ENCODE measurements at regions of chr10 and their contacts with region 1.

Region 1: DNA sequence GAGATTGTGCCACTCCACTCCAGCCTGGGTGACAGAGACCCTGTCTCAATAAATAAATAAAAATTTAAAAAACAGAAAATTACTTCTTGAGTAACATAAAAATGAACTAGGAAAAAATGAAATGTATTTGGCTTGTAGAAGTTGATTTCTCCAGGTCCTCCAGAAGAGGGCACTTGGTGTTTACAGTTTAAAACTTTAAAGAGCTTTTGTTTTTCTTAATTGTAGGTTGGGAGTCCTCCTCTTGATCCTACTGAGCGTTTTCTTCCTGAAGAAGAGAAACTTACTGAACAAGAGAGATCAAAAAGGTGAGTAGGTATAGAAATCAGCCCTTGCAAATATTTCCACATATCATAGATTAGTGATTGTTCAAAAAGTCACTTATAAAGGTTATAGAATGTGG is 16.2 kb downstream of the KIFBP start:
- DNase-seq: peak; percentile 73
- ATAC-seq: peak; percentile 81
- H3K4me3 ChIP-seq: no peak overlapping the region
- H3K27ac ChIP-seq: no peak overlapping the region
- H3K4me1 ChIP-seq: 0 out of 2 replicates have a peak, but pooled peaks cover 2% of the 10 kb centered on the region
- H3K27me3 ChIP-seq: no peaks in the 10 kb centered on the region
- CTCF ChIP-seq: peak; percentile 81
- POLR2A ChIP-seq: no peak
- RAD21 ChIP-seq: peak; percentile 80

Region 2: DNA sequence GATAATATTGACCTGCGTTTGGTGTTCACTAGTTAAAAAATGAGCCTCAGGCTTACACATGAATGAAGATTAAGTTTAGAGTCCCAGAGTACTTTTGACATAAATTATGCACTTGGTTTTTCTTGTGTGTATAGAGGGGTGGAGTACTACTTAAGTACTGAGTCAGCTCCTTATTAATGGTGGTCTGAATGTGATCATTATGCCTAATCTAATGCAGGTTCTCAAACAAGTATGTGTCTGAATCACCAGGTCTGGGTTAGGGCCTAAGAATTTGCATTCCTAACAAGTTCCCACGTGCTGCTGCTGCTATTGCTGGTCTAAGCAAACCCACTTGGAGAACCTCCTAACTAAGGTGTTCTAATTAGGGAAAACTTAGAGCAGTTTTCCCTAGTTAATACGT is 208.2 kb before region 1 on chr10:
- CTCF ChIA-PET with region 1: no interaction called
- POLR2A ChIA-PET with region 1: no interaction called
- dilution Hi-C with region 1: no loop called
- in situ Hi-C with region 1: no loop called
- intact Hi-C with region 1: no loop called
- DNase-seq: peak; percentile 67
- ATAC-seq: no peak
- H3K4me3 ChIP-seq: no peak overlapping the region
- H3K27ac ChIP-seq: no peak overlapping the region
- H3K4me1 ChIP-seq: no peaks in the 10 kb centered on the region
- H3K27me3 ChIP-seq: no peaks in the 10 kb centered on the region
- CTCF ChIP-seq: no peak
- POLR2A ChIP-seq: no peak
- RAD21 ChIP-seq: no peak

Region 3: DNA sequence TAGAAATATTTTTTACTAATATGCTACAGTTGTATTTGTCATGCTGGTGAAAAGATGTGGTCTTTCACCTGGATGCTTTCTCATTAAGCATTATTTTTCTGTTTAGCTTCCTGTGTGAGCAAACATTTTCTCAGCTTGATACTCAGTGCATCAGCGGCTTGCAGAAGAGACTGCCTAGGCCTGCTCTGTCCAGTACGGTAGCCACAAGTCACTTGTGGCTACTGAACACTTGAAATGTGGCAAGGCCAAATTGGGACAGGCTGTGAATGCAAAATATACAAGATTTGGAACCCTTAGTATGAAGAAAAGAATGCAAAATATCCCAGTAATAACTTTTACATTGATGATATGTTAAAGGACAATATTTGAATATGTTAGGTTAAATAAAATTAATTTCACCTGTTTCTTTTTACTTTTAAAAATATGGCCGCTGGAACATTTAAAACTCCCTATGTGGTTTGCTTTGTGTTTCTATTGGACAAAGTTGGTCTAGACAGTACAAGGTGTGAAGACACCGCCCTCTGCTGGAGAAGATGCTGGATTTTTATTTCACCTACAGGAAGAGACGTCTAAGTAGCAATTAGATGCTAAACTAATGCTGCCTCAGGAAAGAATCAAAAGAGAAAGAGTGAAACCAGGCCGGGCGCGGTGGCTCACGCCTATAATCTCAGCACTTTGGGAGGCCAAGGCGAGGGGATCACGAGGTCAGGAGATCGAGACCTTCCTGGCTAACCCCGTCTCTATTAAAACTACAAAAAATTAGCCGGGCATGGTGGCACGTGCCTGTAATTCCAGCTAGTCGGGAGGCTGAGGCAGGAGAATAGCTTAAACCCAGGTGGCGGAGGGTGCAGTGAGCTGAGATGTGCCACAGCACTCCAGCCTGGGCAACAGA is 88.4 kb after region 1 on chr10:
- CTCF ChIA-PET with region 1: interaction called, 16 read pairs
- POLR2A ChIA-PET with region 1: interaction called, 3 read pairs
- dilution Hi-C with region 1: no loop called
- in situ Hi-C with region 1: loop called (anchors 5 kb)
- intact Hi-C with region 1: loop called (anchors 1 kb)
- DNase-seq: peak; percentile 89
- ATAC-seq: peak; percentile 90
- H3K4me3 ChIP-seq: no peak overlapping the region
- H3K27ac ChIP-seq: no peak overlapping the region
- H3K4me1 ChIP-seq: peaks cover 6% of the 10 kb centered on the region
- H3K27me3 ChIP-seq: no peaks in the 10 kb centered on the region
- CTCF ChIP-seq: peak; percentile 87
- POLR2A ChIP-seq: no peak
- RAD21 ChIP-seq: peak; percentile 91

Region 4: GRCh38 chr10:69123747-69124562 is 119.1 kb after region 1 on chr10 and contains the start of gene VPS26A:
- CTCF ChIA-PET with region 1: no interaction called
- POLR2A ChIA-PET with region 1: no interaction called
- dilution Hi-C with region 1: loop called (anchors 25 kb)
- in situ Hi-C with region 1: no loop called
- intact Hi-C with region 1: no loop called
- DNase-seq: peak; percentile 97
- ATAC-seq: peak; percentile 98
- H3K4me3 ChIP-seq: peak within 1 kb of the TSS; percentile 74
- H3K27ac ChIP-seq: peak within 1 kb of the TSS; percentile 84
- H3K4me1 ChIP-seq: no peaks in the 10 kb centered on the region
- H3K27me3 ChIP-seq: no peaks in the 10 kb centered on the region
- CTCF ChIP-seq: no peak; the same call in 1 of the 2 replicates
- POLR2A ChIP-seq: peak; percentile 93
- RAD21 ChIP-seq: no peak
- total RNA-seq, gene VPS26A: 7.2 and 24.7 TPM in 2 replicates

Region 5: GRCh38 chr10:69179743-69180524 is 175.1 kb after region 1 on chr10 and contains the start of gene SUPV3L1:
- CTCF ChIA-PET with region 1: no interaction called
- POLR2A ChIA-PET with region 1: no interaction called
- dilution Hi-C with region 1: no loop called
- in situ Hi-C with region 1: no loop called
- intact Hi-C with region 1: loop called (anchors 1 kb)
- DNase-seq: peak; percentile 98
- ATAC-seq: peak; percentile 98
- H3K4me3 ChIP-seq: peak within 1 kb of the TSS; percentile 76
- H3K27ac ChIP-seq: peak within 1 kb of the TSS; percentile 91
- H3K4me1 ChIP-seq: peaks cover 2% of the 10 kb centered on the region; the same call in 1 of the 2 replicates
- H3K27me3 ChIP-seq: no peaks in the 10 kb centered on the region
- CTCF ChIP-seq: no peak
- POLR2A ChIP-seq: peak; percentile 88
- RAD21 ChIP-seq: no peak; the same call in 1 of the 2 replicates
- total RNA-seq, gene SUPV3L1: 22.5 and 24.4 TPM in 2 replicates

Region 6: DNA sequence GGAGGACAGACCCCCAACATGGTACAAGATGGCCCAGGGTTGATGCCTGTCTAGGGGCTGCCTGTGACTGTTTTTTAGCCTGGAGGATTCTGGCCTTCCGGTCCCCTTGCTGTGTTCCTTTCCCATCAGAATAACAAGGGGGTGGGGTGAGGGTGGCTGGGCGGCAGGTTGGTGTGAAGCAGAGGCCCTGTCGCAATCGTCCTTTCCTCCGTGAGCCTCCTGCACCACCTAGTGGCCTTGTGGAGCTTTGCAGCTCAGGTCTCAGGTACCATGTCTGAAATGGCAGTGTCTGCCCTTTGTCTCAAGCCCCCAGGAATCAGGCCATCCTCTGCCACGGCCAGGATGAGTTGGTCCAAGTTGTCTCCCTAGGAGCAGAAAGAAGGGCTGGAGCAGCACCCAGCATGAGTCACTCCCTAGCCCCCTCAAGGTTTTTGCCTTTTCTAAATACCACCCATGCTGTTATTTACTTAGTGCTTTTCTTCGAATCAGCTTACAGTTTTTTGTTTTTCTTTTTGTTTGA is 387.7 kb after region 1 on chr10:
- CTCF ChIA-PET with region 1: no interaction called
- POLR2A ChIA-PET with region 1: no interaction called
- dilution Hi-C with region 1: no loop called
- in situ Hi-C with region 1: no loop called
- intact Hi-C with region 1: loop called (anchors 5 kb)
- DNase-seq: peak; percentile 77
- ATAC-seq: peak; percentile 98
- H3K4me3 ChIP-seq: no peak overlapping the region
- H3K27ac ChIP-seq: no peak overlapping the region
- H3K4me1 ChIP-seq: no peaks in the 10 kb centered on the region; the same call in 1 of the 2 replicates
- H3K27me3 ChIP-seq: no peaks in the 10 kb centered on the region
- CTCF ChIP-seq: peak; percentile 95
- POLR2A ChIP-seq: 0 out of 2 replicates have a peak, but pooled peaks have one; percentile 24
- RAD21 ChIP-seq: peak; percentile 99

Region 7: GRCh38 chr10:69408318-69409175 is 403.7 kb after region 1 on chr10:
- CTCF ChIA-PET with region 1: interaction called, 3 read pairs
- POLR2A ChIA-PET with region 1: no interaction called
- dilution Hi-C with region 1: no loop called
- in situ Hi-C with region 1: loop called (anchors 10 kb)
- intact Hi-C with region 1: loop called (anchors 5 kb)
- DNase-seq: peak; percentile 89
- ATAC-seq: peak; percentile 92
- H3K4me3 ChIP-seq: peak overlapping the region; percentile 51
- H3K27ac ChIP-seq: no peak overlapping the region
- H3K4me1 ChIP-seq: peaks cover 6% of the 10 kb centered on the region
- H3K27me3 ChIP-seq: no peaks in the 10 kb centered on the region; the same call in 1 of the 2 replicates
- CTCF ChIP-seq: peak; percentile 60
- POLR2A ChIP-seq: no peak
- RAD21 ChIP-seq: peak; percentile 43; the same call in 1 of the 2 replicates